Left lung (tissue), 14 donors: ENCODE measurements at regions of chr4 and their contacts with region 1.

Region 1: GRCh38 chr4:82865592-82865991 is 25.4 kb downstream of the SEC31A start:
- DNase-seq: peak in 1 of 4 donors; percentile 20
- ATAC-seq: peak; percentile 90
- H3K4me3 ChIP-seq: no peak overlapping the region
- H3K27ac ChIP-seq: peak overlapping the region; percentile 53 to 66
- H3K4me1 ChIP-seq: peaks cover 0 to 22% of the 10 kb centered on the region in 2 donors
- H3K27me3 ChIP-seq: no peaks in the 10 kb centered on the region
- CTCF ChIP-seq: no peak

Region 2: GRCh38 chr4:82515705-82516104 is 349.9 kb before region 1 on chr4:
- intact Hi-C with region 1: no loop called
- DNase-seq: no peak
- ATAC-seq: peak; percentile 22
- H3K4me3 ChIP-seq: no peak overlapping the region
- H3K27ac ChIP-seq: no peak overlapping the region
- H3K4me1 ChIP-seq: no peaks in the 10 kb centered on the region
- H3K27me3 ChIP-seq: no peaks in the 10 kb centered on the region
- CTCF ChIP-seq: no peak

Region 3: GRCh38 chr4:82823062-82823461 is 42.5 kb before region 1 on chr4:
- intact Hi-C with region 1: loop called in 1 of 2 experiments (anchors 10 kb)
- DNase-seq: no peak
- ATAC-seq: no peak
- H3K4me3 ChIP-seq: no peak overlapping the region
- H3K27ac ChIP-seq: no peak overlapping the region
- H3K4me1 ChIP-seq: no peaks in the 10 kb centered on the region
- H3K27me3 ChIP-seq: no peaks in the 10 kb centered on the region
- CTCF ChIP-seq: no peak